ENCODE measurements at regions of chr7 and their contacts with region 1.

Region 1: GRCh38 chr7:130982160-130982638 is 248.2 kb upstream of the KLF14 start:
- DNase-seq: no peak
- H3K4me3 ChIP-seq: no peak overlapping the region
- CTCF ChIP-seq: peak; percentile 63

Region 2: GRCh38 chr7:130632111-130632510 is 350.1 kb before region 1 on chr7:
- CTCF ChIA-PET with region 1: no interaction called
- POLR2A ChIA-PET with region 1: no interaction called
- DNase-seq: peak; percentile 16
- H3K4me3 ChIP-seq: no peak overlapping the region
- CTCF ChIP-seq: no peak

Region 3: DNA sequence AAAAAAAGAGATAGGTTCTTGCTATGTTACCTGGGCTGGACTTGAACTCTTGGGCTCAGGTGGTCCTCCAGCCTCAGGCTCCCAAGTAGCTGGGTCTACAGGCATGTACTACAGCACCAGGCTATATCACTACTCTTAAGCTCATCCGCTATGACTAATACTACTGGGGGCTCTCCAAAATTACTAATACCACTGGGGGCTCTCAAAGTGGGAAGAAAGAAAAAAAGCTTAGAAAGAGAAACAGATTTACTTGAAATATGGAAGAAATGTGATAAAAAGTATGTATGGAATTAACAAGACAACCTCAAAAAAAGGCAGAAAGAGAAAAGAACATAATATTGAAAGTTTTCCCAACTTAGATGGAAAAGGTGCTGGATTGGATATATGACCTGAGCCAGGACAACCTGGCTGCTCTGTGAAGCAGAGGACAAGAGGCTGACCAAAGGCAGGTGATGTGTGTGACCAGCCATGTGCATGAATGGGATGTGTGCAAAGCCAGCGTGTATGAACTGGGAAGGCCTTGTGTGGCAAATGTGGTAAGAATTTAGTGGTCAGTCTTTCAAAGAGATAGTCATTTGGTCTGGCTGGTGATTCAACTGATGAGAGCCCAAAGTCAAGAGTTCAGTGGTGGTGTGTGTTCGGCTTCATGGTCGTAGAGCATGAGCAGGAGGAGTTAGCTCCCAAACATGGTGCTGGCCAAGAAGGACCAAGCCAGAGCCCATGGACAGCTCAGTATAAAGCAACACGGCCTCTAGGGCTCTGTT is 15.8 kb before region 1 on chr7:
- CTCF ChIA-PET with region 1: interaction called, 44 read pairs
- POLR2A ChIA-PET with region 1: no interaction called
- DNase-seq: peak; percentile 61
- H3K4me3 ChIP-seq: no peak overlapping the region
- CTCF ChIP-seq: no peak

Region 4: GRCh38 chr7:130996841-130997231 is 14.6 kb after region 1 on chr7:
- CTCF ChIA-PET with region 1: interaction called, 48 read pairs
- POLR2A ChIA-PET with region 1: no interaction called
- DNase-seq: no peak
- H3K4me3 ChIP-seq: no peak overlapping the region
- CTCF ChIP-seq: no peak

Measured in AG04449 (cell line).